ENCODE measurements at regions of chr3 and their contacts with region 1.

Region 1: DNA sequence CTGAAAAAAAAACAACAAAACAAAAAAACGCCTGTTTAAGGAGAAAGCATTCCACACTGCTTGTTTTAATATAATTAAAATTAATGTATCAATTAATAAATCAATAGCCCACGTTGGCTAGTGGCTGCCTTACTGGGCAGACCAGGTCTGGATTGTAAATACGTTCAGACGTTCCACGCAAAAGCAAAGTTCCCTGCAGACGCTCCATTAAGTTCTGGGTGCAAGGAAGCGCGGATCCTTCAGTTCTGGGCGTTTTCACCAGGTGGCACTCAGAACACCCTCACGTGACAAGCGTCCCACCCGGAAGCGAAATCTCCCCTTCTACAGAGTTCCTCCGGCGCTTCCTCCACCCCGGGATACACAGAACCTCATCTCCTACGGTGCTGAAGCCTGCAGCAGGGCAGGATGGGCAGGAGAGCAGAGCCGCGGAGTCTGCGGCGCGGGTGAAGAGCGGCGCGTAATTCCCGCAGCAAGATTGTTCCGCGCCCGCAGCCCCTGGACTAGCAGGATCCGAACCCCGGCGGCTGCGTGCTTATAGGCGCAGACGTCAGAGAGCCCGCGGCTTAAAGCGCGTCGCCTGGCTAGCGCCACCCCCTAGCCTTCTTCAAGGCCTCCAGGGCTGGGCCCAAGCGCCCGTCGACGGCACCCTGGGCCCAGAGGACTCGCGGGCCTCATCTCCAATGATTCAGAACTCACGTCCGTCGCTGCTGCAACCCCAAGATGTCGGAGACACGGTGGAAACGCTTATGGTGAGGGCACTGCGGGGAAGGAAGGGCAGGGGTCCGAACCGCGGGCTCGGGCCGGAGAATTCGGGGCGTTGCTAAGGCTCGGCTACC is at the start of gene SLC25A38:
- DNase-seq: peak; percentile 92
- ATAC-seq: peak; percentile 80
- total RNA-seq, gene SLC25A38: 14.7 TPM

Region 2: GRCh38 chr3:39189959-39190269 is 193.3 kb before region 1 on chr3:
- intact Hi-C with region 1: loop called (anchors 5 kb)
- DNase-seq: no peak
- ATAC-seq: peak; percentile 51

Region 3: GRCh38 chr3:39406368-39407258 is 23.4 kb after region 1 on chr3 and contains the start of gene RPSA:
- intact Hi-C with region 1: loop called (anchors 1 kb)
- DNase-seq: peak; percentile 95
- ATAC-seq: peak; percentile 98
- total RNA-seq, gene RPSA: 472 TPM

Region 4: DNA sequence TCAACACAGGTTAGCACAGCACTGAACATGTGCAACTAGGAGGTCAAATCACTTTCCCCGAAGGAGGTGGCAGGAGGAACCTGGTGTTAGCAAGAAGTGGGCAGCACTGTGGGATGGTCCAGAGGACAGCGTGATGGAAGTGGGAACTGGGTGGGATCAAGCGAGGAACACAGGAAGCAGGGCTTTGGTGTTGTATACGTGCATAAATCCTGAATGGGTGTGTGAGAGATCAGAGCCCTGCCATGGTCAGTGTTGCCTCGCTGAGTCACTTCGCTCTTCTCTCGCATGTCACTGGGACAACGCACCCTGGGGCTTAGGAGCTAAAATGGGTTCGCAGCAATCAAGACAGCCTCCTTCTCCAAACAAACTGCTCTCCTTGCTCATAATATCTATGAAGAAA is 146.3 kb after region 1 on chr3:
- intact Hi-C with region 1: no loop called
- DNase-seq: no peak
- ATAC-seq: no peak